ENCODE measurements at regions of chr10 and their contacts with region 1.

Region 1: DNA sequence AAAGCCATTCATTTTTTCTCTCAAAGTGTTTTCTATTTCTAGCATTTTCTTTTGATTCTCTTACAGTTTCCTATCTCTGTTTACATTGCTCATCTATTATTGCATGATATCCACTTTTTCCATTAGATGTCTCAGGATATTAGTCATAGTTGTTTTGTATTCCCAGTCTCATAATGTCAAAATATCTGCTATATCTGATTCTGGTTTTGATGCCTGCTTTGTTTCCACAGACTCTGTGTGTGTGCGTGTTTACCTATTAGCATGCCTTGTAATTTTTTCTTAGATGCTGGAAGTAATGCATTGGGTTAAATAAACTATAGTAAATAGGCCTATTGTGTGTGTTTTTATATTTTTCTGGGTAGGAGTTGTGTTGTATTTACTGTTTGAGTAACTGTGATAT is 1126.3 kb downstream of the SORCS1 start:
- DNase-seq: no peak
- ATAC-seq: no peak
- H3K4me3 ChIP-seq: no peak overlapping the region
- H3K27ac ChIP-seq: no peak overlapping the region
- H3K4me1 ChIP-seq: no peaks in the 10 kb centered on the region
- H3K27me3 ChIP-seq: no peaks in the 10 kb centered on the region
- CTCF ChIP-seq: no peak

Region 2: GRCh38 chr10:105758209-105758998 is 279.8 kb before region 1 on chr10:
- CTCF ChIA-PET with region 1: no interaction called
- POLR2A ChIA-PET with region 1: no interaction called
- in situ Hi-C with region 1: no loop called
- intact Hi-C with region 1: no loop called
- DNase-seq: no peak
- ATAC-seq: no peak
- H3K4me3 ChIP-seq: no peak overlapping the region
- H3K27ac ChIP-seq: no peak overlapping the region
- H3K4me1 ChIP-seq: no peaks in the 10 kb centered on the region
- H3K27me3 ChIP-seq: no peaks in the 10 kb centered on the region
- CTCF ChIP-seq: no peak

Region 3: GRCh38 chr10:105986912-105987635 is 51.2 kb before region 1 on chr10:
- CTCF ChIA-PET with region 1: no interaction called
- POLR2A ChIA-PET with region 1: no interaction called
- in situ Hi-C with region 1: no loop called
- intact Hi-C with region 1: no loop called
- DNase-seq: no peak
- ATAC-seq: no peak
- H3K4me3 ChIP-seq: no peak overlapping the region
- H3K27ac ChIP-seq: no peak overlapping the region
- H3K4me1 ChIP-seq: no peaks in the 10 kb centered on the region
- H3K27me3 ChIP-seq: no peaks in the 10 kb centered on the region
- CTCF ChIP-seq: no peak

Region 4: GRCh38 chr10:106424981-106425380 is 386.7 kb after region 1 on chr10:
- CTCF ChIA-PET with region 1: no interaction called
- POLR2A ChIA-PET with region 1: no interaction called
- in situ Hi-C with region 1: no loop called
- intact Hi-C with region 1: loop called (anchors 5 kb)
- DNase-seq: no peak
- ATAC-seq: no peak
- H3K4me3 ChIP-seq: no peak overlapping the region
- H3K27ac ChIP-seq: no peak overlapping the region
- H3K4me1 ChIP-seq: no peaks in the 10 kb centered on the region
- H3K27me3 ChIP-seq: no peaks in the 10 kb centered on the region
- CTCF ChIP-seq: no peak

Measured in Panc1 (cell line).